ENCODE measurements at regions of chr19 and their contacts with region 1.

Region 1: DNA sequence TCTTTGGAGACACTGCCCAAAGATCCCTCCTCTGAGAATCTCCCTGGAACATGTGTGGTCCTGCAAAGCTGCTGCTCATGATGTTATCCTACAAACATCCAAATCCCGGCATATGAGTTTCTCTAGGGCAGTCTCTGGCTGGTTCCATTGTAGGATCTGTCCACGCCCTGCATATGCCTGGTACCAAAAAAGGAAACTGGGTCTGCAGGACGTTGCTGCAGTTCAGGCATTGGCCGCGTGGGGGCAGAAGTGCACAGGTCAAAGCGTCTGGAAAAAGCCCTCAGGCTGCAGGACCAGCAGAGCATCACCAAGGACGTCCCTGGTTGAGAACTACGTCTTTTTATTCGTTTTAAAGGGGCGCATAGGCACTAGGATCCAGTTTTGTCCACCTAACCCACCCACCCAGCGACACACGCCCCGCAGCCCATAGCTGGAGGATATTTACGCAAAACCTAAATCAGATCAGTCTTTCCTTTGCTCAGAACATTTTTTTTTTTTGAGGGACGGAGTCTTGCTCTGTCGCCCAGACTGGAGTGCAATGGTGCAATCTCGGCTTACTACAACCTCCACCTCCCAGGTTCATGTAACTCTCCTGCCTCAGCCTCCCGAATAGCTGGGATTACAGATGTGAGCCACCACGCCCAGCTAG is 12.9 kb upstream of the ZNF564 start:
- DNase-seq: peak; percentile 87
- H3K4me3 ChIP-seq: no peak overlapping the region
- H3K27ac ChIP-seq: no peak overlapping the region
- H3K4me1 ChIP-seq: peaks cover 3% of the 10 kb centered on the region
- CTCF ChIP-seq: peak; percentile 97

Region 2: DNA sequence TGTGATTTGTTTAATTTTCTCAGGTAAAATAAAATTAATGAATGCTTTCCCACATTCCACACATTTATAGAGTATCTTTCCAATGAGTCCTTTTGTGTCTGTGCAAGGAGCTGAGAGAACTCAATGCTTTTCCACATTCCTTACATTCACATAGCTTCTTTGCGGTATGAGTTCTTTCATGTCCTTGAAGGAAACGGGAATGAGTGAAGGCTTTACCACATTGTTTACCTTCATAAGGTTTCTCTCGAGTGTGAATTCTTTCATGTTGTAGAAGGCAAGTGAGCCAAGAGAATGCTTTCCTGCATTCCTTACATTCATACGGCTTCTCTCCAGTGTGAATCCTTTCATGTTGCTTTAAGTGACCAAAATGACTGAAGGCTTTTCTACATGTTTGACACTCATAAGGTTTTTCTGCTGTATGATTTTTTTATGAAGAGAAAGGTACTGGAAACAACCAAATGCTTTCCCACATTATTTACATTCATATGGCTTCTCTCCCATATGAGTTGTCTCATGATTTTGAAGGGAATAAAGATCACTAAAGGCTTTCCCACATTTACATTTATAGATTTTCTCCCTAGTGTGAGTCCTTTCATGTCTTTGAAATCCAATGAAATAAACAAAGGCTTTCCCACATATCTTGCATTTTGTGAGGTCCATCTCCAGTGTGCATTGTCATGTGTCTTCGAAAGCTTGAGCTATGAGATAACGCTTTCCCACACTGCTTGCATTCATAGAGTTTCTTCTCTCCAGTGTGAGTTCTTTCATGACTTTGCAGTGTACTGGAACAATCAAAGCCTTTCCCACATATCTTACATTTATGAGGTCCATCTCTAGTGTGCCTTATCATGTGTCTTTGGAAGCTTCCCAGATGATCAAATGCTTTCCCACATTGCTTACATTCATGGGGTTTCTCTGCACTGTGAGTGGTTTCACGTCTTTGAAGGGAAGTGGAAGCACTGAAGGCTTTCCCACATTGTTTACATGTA is 184.1 kb before region 1 on chr19:
- CTCF ChIA-PET with region 1: no interaction called
- POLR2A ChIA-PET with region 1: no interaction called
- intact Hi-C with region 1: no loop called
- DNase-seq: no peak
- H3K4me3 ChIP-seq: no peak overlapping the region
- H3K27ac ChIP-seq: no peak overlapping the region
- H3K4me1 ChIP-seq: no peaks in the 10 kb centered on the region
- CTCF ChIP-seq: no peak

Region 3: DNA sequence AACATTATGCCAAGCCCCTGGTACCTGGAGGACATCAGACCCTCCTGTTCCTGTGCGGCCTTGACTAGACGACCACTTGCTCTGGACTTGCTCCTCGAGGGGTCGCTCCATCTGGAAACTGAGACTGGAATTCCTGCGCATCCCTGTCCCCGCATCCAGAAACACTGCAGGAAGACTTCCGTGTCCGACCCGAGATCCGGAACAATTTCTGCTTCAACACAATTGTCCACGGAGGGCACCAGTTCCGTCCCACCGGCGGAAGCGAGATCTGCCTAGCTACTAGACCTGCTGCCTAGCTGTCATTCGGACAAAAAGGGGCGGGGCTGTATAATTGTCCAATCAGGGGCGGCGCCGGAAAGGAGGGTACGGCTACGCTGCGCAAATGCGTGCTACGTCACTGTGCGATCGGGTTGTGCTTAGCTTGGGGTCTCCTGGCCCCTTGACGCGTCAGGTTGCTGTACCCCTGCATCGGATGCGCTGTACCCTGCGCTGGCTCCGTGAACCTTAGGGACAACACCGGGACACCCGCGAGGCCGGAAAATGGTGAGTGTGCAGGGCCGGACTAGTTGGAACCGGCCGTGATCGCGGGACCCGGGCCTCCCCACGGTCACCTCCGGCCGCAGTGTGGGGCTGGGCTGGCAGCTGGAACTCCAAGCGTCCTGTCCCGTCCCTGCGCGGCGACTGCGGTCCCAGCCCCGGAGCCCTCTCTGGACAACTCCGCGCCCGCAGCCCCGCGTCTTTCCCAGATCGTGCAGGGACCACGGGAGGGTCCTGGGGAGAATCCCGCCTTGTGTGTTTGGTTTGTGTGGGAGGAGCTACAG is 46.6 kb after region 1 on chr19 and contains the starts of genes ZNF490 and ZNF791:
- CTCF ChIA-PET with region 1: no interaction called
- POLR2A ChIA-PET with region 1: interaction called, 3 read pairs
- intact Hi-C with region 1: loop called (anchors 2 kb)
- DNase-seq: peak; percentile 98
- H3K4me3 ChIP-seq: peak within 1 kb of the TSS; percentile 90
- H3K27ac ChIP-seq: no peak within 1 kb of the TSS
- H3K4me1 ChIP-seq: peaks cover 37% of the 10 kb centered on the region
- CTCF ChIP-seq: peak; percentile 43; the same call in 1 of the 2 replicates
- total RNA-seq, gene ZNF490: 6.3 and 8.6 TPM in 2 replicates
- total RNA-seq, gene ZNF791: 5.3 and 7.8 TPM in 2 replicates

Region 4: GRCh38 chr19:12639901-12640613 is 75.9 kb after region 1 on chr19:
- CTCF ChIA-PET with region 1: no interaction called
- POLR2A ChIA-PET with region 1: interaction called, 4 read pairs
- intact Hi-C with region 1: loop called (anchors 2 kb)
- DNase-seq: peak; percentile 83
- H3K4me3 ChIP-seq: no peak overlapping the region
- H3K27ac ChIP-seq: no peak overlapping the region
- H3K4me1 ChIP-seq: peaks cover 6% of the 10 kb centered on the region
- CTCF ChIP-seq: peak; percentile 86